ENCODE measurements at regions of chr16 and their contacts with region 1.

Region 1: DNA sequence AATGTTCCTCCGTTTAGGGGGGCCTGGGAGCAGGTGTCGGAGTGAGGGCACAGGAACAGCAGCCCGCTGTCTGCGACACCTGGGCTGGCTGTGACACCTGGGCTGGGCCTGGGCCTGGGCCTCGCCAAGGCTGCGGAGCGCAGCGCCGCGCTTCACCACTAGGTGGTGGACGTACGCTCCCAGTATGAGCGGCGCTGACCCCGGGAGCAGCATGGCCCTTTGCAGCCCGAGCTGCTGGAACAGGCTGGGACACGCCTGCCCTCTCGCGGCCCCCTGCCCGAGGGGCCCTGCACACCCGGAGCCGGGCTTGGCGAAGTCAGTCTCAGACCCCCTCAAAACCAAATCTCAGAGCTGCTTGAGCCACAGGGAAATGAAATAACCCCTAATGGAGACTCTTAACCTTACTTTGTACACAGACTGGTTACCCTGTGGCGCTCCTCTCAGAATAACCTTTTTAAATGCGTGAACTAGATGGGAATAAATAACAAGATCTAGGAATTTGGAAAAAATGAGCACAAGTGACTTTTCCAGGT is 38.6 kb upstream of the FA2H start:
- DNase-seq: peak; percentile 93
- H3K4me3 ChIP-seq: peak overlapping the region in 1 of 2 experiments; percentile 20; a peak in 1 of 4 replicates
- H3K27ac ChIP-seq: no peak overlapping the region
- H3K4me1 ChIP-seq: no peaks in the 10 kb centered on the region
- H3K27me3 ChIP-seq: no peaks in the 10 kb centered on the region; the same call in 1 of the 2 replicates
- CTCF ChIP-seq: peak; percentile 81
- EP300 ChIP-seq: no peak
- RAD21 ChIP-seq: peak; percentile 82

Region 2: DNA sequence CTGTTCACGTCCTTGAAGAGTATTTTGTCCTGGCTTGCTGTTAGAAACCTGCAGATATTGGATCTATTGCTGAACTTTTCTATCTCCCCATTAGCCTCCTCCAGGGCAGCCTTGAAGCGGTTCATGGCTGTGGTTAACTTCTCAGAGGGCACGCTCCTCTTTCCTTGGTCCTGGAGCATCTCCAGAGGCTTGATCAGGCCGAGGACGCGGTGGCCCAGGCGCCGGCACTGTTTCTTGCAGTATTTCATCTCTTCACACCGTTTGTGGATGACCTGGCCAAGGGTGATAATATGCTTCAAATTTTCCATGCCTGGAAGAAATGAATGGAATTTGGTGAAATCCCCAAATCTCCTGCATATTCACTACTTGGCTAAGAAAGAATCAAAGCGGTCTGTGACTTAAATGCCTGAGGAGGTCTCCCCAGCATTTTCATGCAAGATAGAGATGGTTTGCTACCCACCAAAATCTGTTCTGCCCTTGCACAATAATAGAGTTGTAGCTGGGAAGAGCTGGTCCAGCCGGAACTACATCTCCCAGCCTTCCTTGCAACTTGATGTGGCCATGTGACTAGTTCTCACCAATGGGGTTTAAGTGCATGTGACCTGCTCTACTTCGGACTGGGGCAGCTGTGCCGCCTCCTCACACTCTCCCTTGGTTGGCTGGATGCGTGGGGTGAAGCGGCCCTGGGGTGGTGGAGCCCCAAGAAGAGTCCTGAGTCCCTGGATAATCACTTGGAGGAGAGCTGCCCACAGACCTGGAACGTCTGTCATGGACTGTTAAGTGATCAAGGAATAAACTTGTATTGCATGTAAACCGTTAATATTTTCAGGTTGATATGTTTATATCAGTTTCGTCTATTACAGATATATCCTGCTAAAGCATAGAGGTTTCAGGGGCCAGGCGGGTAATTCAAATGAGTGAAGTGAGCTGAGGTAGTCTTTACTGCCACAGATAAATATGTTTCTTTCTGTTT is 117.4 kb before region 1 on chr16:
- CTCF ChIA-PET with region 1: interaction called, 10 read pairs
- POLR2A ChIA-PET with region 1: no interaction called
- DNase-seq: peak; percentile 94
- H3K4me3 ChIP-seq: peak overlapping the region; percentile 50 to 55
- H3K27ac ChIP-seq: peak overlapping the region in 1 of 2 experiments; percentile 39; a peak in 1 of 4 replicates
- H3K4me1 ChIP-seq: no peaks in the 10 kb centered on the region; a peak in 1 of 4 replicates
- H3K27me3 ChIP-seq: no peaks in the 10 kb centered on the region
- CTCF ChIP-seq: no peak
- EP300 ChIP-seq: no peak
- RAD21 ChIP-seq: no peak

Region 3: GRCh38 chr16:74726716-74727115 is 86.5 kb before region 1 on chr16:
- CTCF ChIA-PET with region 1: interaction called, 13 read pairs
- POLR2A ChIA-PET with region 1: no interaction called
- DNase-seq: no peak
- H3K4me3 ChIP-seq: no peak overlapping the region
- H3K27ac ChIP-seq: no peak overlapping the region
- H3K4me1 ChIP-seq: peaks cover 0 to 9% of the 10 kb centered on the region in 2 experiments; a peak in 1 of 4 replicates
- H3K27me3 ChIP-seq: no peaks in the 10 kb centered on the region
- CTCF ChIP-seq: peak; percentile 53
- EP300 ChIP-seq: no peak
- RAD21 ChIP-seq: no peak

Region 4: DNA sequence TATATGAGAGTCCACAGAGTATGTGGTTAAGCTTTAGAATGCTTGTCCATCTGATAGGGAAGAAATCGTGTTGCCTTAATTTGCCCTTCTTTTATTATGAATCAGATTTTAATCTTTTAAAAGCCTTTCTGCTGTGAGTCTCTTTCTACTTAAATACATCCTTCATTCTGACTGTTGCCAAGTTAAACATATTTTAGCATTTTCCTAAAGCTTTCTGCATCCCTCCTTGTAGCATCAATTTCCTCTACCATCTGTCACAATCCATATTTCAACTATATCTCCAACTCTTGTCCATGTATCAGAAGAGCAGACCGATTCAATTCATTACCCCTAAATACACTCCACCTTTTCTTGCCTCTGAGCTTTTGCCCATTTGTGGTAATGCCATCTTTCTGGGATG is 18.1 kb before region 1 on chr16:
- CTCF ChIA-PET with region 1: interaction called, 14 read pairs
- POLR2A ChIA-PET with region 1: no interaction called
- DNase-seq: no peak
- H3K4me3 ChIP-seq: no peak overlapping the region
- H3K27ac ChIP-seq: no peak overlapping the region
- H3K4me1 ChIP-seq: no peaks in the 10 kb centered on the region
- H3K27me3 ChIP-seq: no peaks in the 10 kb centered on the region; the same call in 1 of the 2 replicates
- CTCF ChIP-seq: no peak
- EP300 ChIP-seq: no peak
- RAD21 ChIP-seq: no peak

Region 5: DNA sequence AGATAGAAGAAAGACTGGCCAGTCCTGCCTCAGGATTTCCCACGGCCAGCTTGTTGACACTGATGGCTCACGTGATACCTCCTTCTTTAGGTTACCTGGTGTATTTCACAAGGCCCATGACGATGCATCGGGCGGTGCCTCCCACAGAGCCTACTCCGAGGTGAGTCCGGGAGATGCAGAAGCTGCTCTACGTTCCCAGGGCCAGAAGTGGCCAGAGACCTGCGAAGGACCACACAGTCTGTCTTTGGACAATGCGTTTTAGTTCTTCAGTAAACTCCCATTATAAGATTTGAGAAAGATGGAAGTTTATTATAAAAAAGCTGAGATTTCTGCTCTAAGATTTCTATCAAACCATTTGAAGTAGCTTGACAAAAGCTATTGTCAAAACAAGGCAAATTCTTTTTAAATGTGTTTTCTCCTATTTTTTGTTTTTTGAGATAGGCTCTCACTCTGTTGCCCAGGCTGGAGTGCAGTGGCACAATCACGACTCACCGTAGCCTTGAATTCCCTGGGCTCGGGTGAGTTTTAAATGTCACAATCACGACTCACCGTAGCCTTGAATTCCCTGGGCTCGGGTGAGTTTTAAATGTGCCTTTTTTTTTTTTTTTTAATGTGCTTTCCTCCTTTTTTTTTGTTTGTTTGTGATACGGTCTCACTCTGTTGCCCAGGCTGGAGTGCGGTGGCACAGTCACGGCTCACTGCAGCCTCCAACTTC is 30.7 kb after region 1 on chr16:
- CTCF ChIA-PET with region 1: interaction called, 10 read pairs
- POLR2A ChIA-PET with region 1: no interaction called
- DNase-seq: no peak
- H3K4me3 ChIP-seq: no peak overlapping the region
- H3K27ac ChIP-seq: no peak overlapping the region
- H3K4me1 ChIP-seq: no peaks in the 10 kb centered on the region
- H3K27me3 ChIP-seq: no peaks in the 10 kb centered on the region
- CTCF ChIP-seq: no peak
- EP300 ChIP-seq: no peak
- RAD21 ChIP-seq: no peak

Measured in SK-N-SH (cell line).